GM12878 (cell line): ENCODE measurements at regions of chr2 and their contacts with region 1.

Region 1: DNA sequence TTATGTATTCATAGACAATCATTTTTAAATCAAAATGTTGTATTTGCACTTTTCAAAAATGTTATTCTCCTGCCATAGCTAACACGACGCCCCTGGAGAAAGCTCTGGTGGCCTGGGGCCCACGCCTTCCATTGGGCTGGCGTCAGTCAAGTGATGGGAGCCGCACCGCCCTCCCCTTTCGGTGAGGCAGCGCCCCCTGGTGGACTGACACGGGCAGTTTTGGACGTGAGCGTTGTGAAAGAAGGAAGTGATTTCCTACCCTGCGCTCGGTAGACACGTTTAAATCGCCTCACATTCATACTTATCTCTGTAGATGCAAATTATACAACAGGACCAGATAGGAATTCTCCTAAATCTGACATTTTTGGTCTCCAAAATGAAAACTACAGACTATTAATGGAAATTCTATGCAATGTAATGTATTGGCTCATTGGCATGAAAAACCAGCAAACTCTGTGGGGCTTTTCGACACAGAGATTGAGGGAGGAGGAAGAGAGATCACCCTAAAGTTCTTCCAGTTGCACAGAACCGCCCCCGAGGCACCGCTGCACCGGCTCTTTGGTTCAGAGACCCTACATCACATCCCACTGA is 326.2 kb upstream of the SOX11 start:
- DNase-seq: no peak
- ATAC-seq: peak; percentile 99
- H3K4me3 ChIP-seq: no peak overlapping the region
- H3K27ac ChIP-seq: no peak overlapping the region
- H3K4me1 ChIP-seq: no peaks in the 10 kb centered on the region
- H3K27me3 ChIP-seq: no peaks in the 10 kb centered on the region
- CTCF ChIP-seq: peak; percentile 60 to 66 (median 65)
- EP300 ChIP-seq: no peak
- POLR2A ChIP-seq: no peak
- RAD21 ChIP-seq: peak; percentile 44

Region 2: GRCh38 chr2:5343785-5344335 is 22.1 kb before region 1 on chr2:
- CTCF ChIA-PET with region 1: interaction called, 10 read pairs
- POLR2A ChIA-PET with region 1: no interaction called
- RAD21 ChIA-PET with region 1: no interaction called
- SMC1A ChIA-PET with region 1: no interaction called
- in situ Hi-C with region 1: no loop called
- intact Hi-C with region 1: no loop called
- DNase-seq: no peak
- ATAC-seq: no peak
- H3K4me3 ChIP-seq: no peak overlapping the region
- H3K27ac ChIP-seq: no peak overlapping the region
- H3K4me1 ChIP-seq: no peaks in the 10 kb centered on the region
- H3K27me3 ChIP-seq: no peaks in the 10 kb centered on the region
- CTCF ChIP-seq: no peak
- EP300 ChIP-seq: no peak
- POLR2A ChIP-seq: no peak
- RAD21 ChIP-seq: no peak